Heart left ventricle (tissue), 16 donors: ENCODE measurements at regions of chr11 and their contacts with region 1.

Region 1: GRCh38 chr11:33329705-33330329 is 72.6 kb downstream of the HIPK3 start:
- DNase-seq: peak in 3 of 5 donors; percentile 33 to 46 (median 40)
- ATAC-seq: peak in 3 of 4 donors; percentile 68 to 83 (median 68)
- H3K4me3 ChIP-seq: no peak overlapping the region
- H3K27ac ChIP-seq: peak overlapping the region in 2 of 12 donors; percentile 4 to 15
- H3K4me1 ChIP-seq: peaks cover 14 to 95% (median 60%) of the 10 kb centered on the region in 12 donors
- H3K27me3 ChIP-seq: no peaks in the 10 kb centered on the region
- CTCF ChIP-seq: peak; percentile 52 to 79 (median 64)
- POLR2A ChIP-seq: no peak

Region 2: DNA sequence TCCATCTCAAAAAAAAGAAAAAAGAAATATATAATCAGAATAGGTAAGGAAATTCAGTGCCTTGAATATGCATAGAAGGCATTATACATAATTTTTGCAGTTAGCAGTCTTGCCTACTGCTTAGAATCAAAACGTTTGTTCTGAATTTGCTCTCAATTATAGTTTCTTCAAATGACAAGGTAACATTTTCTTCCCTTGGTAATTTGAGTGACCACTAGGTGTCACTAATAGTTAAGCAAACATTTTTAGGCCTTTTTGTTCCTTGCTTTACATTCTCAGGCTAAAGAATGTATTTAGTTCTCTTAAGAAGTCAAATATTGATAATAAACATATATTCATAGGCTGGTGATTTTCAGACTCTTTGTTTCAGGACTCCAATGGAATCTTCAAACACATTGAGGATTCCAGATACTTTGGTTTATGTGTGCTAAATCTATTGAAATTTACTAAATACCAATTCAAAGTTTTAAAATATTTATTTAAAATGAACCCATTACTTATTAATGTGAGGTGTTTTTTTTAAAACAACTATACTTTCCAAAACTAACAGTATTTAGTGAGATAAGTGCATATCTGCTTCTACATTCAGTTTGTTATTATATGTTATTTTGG is 369.2 kb before region 1 on chr11:
- intact Hi-C with region 1: loop called in 1 of 10 experiments (anchors 10 kb)
- DNase-seq: no peak
- ATAC-seq: no peak
- H3K4me3 ChIP-seq: no peak overlapping the region
- H3K27ac ChIP-seq: no peak overlapping the region
- H3K4me1 ChIP-seq: peaks cover 0 to 4% (median 0%) of the 10 kb centered on the region in 12 donors
- H3K27me3 ChIP-seq: no peaks in the 10 kb centered on the region
- CTCF ChIP-seq: peak; percentile 51 to 77 (median 66)
- POLR2A ChIP-seq: no peak

Region 3: DNA sequence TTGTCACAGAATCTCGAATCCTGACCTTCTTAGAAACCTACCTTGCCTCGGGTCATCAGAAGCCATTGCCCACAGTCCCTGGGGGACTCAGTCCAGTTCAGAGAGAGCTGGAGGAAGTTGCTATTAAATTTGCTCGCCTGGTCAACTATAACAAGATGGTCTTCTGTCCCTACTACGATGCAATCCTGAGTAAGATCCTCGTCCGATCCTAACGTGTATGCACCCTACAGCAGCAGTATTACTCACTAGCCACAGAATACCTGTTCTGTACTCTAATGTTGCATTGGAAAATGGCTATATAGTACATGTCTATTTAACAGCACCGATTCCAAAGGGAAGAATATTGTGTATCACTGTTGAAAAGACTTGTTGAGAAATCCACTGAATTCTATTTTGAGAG is 257.4 kb before region 1 on chr11:
- intact Hi-C with region 1: loop called in 1 of 10 experiments (anchors 10 kb)
- DNase-seq: no peak
- ATAC-seq: no peak
- H3K4me3 ChIP-seq: no peak overlapping the region
- H3K27ac ChIP-seq: no peak overlapping the region
- H3K4me1 ChIP-seq: no peaks in the 10 kb centered on the region
- H3K27me3 ChIP-seq: no peaks in the 10 kb centered on the region
- CTCF ChIP-seq: no peak
- POLR2A ChIP-seq: no peak

Region 4: DNA sequence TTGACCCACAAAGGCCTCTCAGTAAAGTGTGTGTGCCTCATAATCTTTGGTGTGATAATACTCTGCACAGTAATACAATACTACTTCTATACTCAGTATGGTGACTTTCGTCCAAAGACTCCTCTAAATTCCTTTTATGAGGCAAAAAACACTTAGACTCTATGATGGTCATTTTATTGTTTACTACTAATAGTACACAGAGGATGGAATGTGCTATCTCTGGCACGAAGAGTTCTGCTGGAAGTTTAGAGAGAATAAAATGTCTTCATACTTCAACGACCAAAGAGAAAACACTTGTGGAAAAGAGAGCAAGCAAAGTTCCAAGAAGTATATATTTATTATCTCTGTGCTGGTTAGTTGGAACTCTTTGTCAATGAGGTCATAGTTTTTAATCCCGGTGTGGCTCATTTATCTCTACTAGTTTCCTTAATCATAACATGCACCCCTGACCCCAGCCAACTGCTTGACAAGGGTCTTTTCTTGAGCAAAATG is 161.1 kb before region 1 on chr11:
- intact Hi-C with region 1: loop called (anchors 2 to 5 kb)
- DNase-seq: no peak
- ATAC-seq: peak in 3 of 4 donors; percentile 28 to 52 (median 29)
- H3K4me3 ChIP-seq: no peak overlapping the region
- H3K27ac ChIP-seq: peak overlapping the region in 1 of 12 donors; percentile 33
- H3K4me1 ChIP-seq: peaks cover 0 to 20% (median 5%) of the 10 kb centered on the region in 12 donors
- H3K27me3 ChIP-seq: no peaks in the 10 kb centered on the region
- CTCF ChIP-seq: no peak
- POLR2A ChIP-seq: no peak

Region 5: DNA sequence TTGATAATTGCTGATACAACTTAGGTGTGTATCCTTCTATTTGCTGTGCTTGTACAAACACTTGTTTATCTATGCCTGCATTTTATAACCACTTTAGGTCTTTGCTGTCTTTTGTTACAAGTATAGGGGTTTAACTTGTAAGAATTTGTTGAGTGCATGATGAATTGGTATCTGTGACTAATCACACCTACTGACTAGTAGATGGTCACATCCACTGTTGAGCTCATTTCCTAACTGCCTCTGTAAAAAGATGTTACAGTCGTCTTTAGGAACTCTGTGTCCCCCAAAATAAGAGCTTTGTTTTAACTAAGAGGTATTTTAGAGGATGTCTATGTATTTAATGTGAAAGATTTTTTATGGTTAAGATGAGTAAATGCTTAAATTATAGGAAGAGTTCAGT is 12.2 kb before region 1 on chr11:
- intact Hi-C with region 1: no loop called
- DNase-seq: no peak
- ATAC-seq: no peak
- H3K4me3 ChIP-seq: no peak overlapping the region
- H3K27ac ChIP-seq: peak overlapping the region in 7 of 12 donors; percentile 2 to 82 (median 67)
- H3K4me1 ChIP-seq: peaks cover 5 to 93% (median 75%) of the 10 kb centered on the region in 12 donors
- H3K27me3 ChIP-seq: no peaks in the 10 kb centered on the region
- CTCF ChIP-seq: no peak
- POLR2A ChIP-seq: no peak